ENCODE measurements at regions of chr21 and their contacts with region 1.

Region 1: GRCh38 chr21:16194095-16194787 is 464.5 kb downstream of the USP25 start:
- DNase-seq: peak; percentile 32 to 87 (median 73)
- H3K4me3 ChIP-seq: peak overlapping the region; percentile 33 to 75 (median 56)
- H3K27ac ChIP-seq: peak overlapping the region; percentile 57 to 95 (median 86)
- H3K27me3 ChIP-seq: no peaks in the 10 kb centered on the region
- CTCF ChIP-seq: peak in 52 of 56 donors; percentile 23 to 70 (median 50)

Region 2: DNA sequence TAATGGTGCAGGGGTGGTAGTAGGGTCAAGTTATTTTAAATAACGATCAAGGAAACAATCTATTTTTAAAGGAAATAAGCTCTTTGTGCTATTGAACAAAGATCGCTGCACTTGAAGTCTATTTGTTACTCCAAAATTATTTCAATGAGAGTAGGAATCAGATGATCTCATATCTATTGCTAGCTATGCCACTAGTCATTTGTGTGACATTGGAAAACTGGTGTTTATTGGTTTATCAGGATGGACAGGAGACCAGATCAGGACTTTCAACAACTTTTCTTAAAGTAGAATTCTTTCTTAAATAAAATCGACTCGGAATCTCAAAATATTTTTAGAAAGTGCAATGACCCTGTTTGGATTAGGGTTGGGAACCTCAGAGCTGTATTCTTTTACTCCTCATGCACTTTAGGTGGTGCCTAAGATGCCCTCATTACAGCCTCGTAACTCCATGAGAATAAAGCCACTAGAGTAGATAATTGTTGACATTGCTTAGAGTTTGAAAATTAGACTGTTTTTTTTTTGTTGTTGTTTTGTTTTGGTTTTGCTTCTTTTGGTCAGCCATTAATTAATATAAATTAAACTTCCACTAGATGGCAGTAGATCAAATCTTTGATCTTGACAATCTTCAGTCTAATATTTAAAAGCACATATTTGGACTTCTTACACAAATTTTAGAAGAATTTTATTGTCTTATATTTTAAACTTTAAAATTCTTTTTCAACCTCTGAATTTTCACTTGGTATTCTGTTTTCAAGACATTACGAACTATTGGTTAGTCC is 112.0 kb before region 1 on chr21:
- intact Hi-C with region 1: loop called (anchors 10 kb)
- DNase-seq: no peak
- H3K4me3 ChIP-seq: peak overlapping the region in 56 of 59 donors; percentile 0 to 60 (median 38)
- H3K27ac ChIP-seq: peak overlapping the region; percentile 49 to 99 (median 97)
- H3K27me3 ChIP-seq: no peaks in the 10 kb centered on the region
- CTCF ChIP-seq: peak; percentile 42 to 90 (median 67)

Region 3: DNA sequence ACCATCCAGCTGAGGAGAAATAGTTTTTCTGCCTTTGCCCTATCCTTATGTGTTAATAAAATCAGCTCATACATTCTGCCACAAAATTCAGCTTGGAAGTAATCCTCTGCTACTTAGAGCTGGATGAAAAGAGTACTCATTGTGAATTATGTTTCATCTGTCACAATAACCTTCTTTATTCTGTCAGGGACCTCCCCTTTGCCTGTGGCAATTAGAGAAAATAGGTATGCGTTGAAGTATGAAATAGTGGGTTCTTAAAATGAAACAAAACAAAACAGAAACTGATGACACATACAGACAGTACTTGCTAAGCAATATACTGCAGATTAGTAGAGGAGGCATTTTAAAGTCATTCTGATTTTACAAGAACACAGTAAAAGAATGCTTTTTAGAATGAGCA is 114.0 kb after region 1 on chr21:
- intact Hi-C with region 1: loop called (anchors 10 kb)
- DNase-seq: no peak
- H3K4me3 ChIP-seq: peak overlapping the region; percentile 15 to 67 (median 52)
- H3K27ac ChIP-seq: peak overlapping the region; percentile 54 to 93 (median 88)
- H3K27me3 ChIP-seq: no peaks in the 10 kb centered on the region
- CTCF ChIP-seq: no peak

Region 4: DNA sequence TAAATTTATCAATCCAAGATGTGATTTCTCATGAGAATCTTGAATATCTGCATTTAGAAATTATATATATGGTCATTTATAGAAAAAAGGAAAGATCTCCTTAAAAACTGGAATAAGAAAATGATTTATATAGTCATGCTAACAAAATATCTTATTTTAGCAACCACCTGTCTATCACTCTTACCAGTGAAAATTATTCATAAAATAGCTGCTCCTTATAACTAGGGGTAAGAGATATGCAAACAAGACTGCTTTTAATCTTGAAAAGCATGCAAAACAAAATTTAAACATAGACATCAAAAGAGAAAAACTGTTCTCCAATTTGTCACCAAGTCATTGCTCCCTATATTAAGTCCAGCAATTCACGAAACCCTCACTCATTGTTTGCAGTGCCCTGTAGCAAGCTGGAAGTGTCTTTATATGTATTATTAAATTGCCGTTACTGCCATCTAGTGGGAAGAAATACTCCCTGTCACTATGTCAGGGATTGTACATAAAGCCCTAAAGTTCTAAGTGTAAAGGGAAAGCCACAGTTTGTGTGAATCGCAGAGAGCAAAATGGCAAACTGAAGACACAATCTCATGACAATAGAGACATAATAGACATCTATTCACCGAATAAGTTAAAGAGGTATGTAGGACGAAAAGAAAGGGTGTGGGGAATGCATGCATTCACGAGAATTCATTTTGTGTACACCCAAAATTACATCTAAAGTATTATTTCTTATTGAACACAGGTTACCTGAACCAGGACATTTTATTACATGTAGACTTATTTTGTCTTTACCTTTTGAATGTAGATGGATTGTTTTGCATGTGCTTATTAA is 136.1 kb after region 1 on chr21:
- intact Hi-C with region 1: loop called in 1 of 2 experiments (anchors 2 kb)
- DNase-seq: peak in 2 of 10 donors; percentile 29 to 31
- H3K4me3 ChIP-seq: peak overlapping the region in 44 of 59 donors; percentile 0 to 47 (median 23)
- H3K27ac ChIP-seq: peak overlapping the region in 37 of 59 donors; percentile 1 to 71 (median 28)
- H3K27me3 ChIP-seq: no peaks in the 10 kb centered on the region
- CTCF ChIP-seq: peak; percentile 70 to 95 (median 85)

Measured in dorsolateral prefrontal cortex (tissue), 120 donors.